HCT116 (cell line): ENCODE measurements at regions of chr7 and their contacts with region 1.

Region 1: DNA sequence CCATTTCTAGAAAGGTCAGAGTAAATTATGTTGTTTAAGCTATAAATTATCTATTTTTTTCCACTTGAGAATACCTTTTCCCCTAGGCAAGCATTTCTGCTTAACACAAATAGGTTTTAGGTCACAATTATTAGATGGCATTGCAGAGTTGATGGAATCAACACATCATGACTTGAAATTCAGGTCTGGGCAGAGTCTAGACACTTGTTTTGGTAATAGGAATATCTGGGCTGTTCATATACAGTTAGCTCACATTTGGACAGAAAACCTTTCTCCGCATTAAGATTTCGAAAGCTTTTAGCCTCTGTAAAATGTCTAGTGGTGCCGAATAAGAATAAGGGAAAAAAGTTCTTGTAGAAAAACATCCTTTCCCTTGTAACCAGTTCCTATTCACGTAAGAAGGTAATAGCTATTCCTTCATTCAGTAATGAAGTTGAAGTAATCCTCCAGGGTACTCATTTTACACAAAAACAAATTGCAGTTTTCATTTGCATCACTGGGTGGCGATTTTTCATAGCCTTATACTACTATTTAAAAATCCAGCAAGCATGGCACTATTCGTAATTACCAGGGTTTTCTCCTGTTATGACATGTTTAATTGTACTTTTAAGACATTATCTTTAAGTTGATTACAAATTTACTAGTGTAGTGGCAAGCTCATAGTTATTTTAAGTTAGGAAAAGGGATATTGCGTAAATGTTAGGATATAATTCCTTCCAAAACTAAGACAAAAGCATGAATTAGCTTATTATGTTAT is 37.0 kb downstream of the RPA3 start:
- DNase-seq: peak; percentile 44
- ATAC-seq: peak; percentile 84
- H3K4me3 ChIP-seq: no peak overlapping the region
- H3K27ac ChIP-seq: no peak overlapping the region
- H3K4me1 ChIP-seq: 0 out of 4 replicates have a peak, but pooled peaks cover 0 to 4% of the 10 kb centered on the region in 2 experiments
- H3K27me3 ChIP-seq: no peaks in the 10 kb centered on the region
- CTCF ChIP-seq: peak; percentile 41 to 75 (median 66); a peak in 5 of 6 replicates
- POLR2A ChIP-seq: no peak
- RAD21 ChIP-seq: peak; percentile 80

Region 2: DNA sequence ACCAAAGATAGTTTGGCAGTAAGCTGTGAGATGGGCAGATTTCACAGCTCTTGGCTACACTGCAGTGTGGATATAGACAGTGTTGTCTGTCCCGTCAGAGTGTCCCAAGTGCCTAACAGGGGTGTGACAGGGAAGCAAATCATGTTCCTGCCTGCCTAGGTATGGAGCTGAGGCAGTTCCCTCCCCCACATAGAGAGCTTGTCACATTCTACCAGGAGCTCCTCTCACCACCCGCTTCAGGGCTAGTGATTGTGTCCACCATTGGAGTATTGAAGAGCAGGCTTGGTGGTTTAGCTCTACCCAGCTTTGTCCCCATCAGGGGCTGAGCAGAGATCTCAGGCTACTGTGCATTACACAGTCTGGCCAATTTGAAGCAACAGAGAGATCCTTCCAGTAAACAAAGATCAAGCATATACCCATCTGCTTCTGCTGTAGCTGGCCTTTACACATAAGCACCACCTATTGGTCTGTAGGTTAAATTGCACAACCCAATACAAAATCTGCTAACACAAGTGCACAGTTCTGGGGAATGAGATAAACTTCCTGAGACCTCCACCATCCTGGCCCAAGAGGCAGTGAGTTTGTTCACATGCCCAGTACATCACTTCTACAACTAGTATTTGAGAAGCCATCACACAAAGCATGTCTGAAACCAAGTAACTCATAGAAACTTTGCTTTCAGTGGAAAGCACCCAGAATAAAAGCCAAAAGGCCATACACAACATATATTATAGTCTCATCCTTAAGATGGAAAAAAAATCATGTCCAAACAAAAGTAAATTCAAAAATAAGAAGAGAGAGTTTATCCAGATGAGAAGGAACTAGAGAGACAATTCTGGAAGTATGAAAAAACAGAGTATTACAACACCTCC is 354.5 kb after region 1 on chr7:
- CTCF ChIA-PET with region 1: interaction called, 11 read pairs
- POLR2A ChIA-PET with region 1: no interaction called
- RAD21 ChIA-PET with region 1: interaction called in 1 of 2 experiments, 3 read pairs
- intact Hi-C with region 1: loop called (anchors 10 kb)
- DNase-seq: peak; percentile 10
- ATAC-seq: peak; percentile 96
- H3K4me3 ChIP-seq: no peak overlapping the region
- H3K27ac ChIP-seq: no peak overlapping the region
- H3K4me1 ChIP-seq: no peaks in the 10 kb centered on the region
- H3K27me3 ChIP-seq: no peaks in the 10 kb centered on the region
- CTCF ChIP-seq: peak; percentile 13 to 63 (median 51); a peak in 5 of 6 replicates
- POLR2A ChIP-seq: no peak
- RAD21 ChIP-seq: peak; percentile 57

Region 3: GRCh38 chr7:8190119-8190895 is 508.9 kb after region 1 on chr7:
- CTCF ChIA-PET with region 1: interaction called, 13 read pairs
- POLR2A ChIA-PET with region 1: no interaction called
- RAD21 ChIA-PET with region 1: no interaction called
- intact Hi-C with region 1: loop called (anchors 5 kb)
- DNase-seq: peak; percentile 26
- ATAC-seq: peak; percentile 76
- H3K4me3 ChIP-seq: no peak overlapping the region
- H3K27ac ChIP-seq: no peak overlapping the region
- H3K4me1 ChIP-seq: no peaks in the 10 kb centered on the region
- H3K27me3 ChIP-seq: no peaks in the 10 kb centered on the region
- CTCF ChIP-seq: peak; percentile 52 to 64 (median 59); a peak in 5 of 6 replicates
- POLR2A ChIP-seq: no peak
- RAD21 ChIP-seq: peak; percentile 77